ENCODE measurements at regions of chr2 and their contacts with region 1.

Region 1: GRCh38 chr2:182077451-182078142 is 91.9 kb downstream of the PPP1R1C start:
- DNase-seq: peak; percentile 26
- ATAC-seq: no peak
- H3K4me3 Mint-ChIP-seq: no peak overlapping the region
- H3K27ac Mint-ChIP-seq: no peak overlapping the region
- H3K4me1 Mint-ChIP-seq: no peaks in the 10 kb centered on the region
- H3K27me3 Mint-ChIP-seq: peaks cover 3% of the 10 kb centered on the region

Region 2: GRCh38 chr2:181742922-181743722 is 334.5 kb before region 1 on chr2:
- CTCF ChIA-PET with region 1: interaction called, 14 read pairs
- POLR2A ChIA-PET with region 1: no interaction called
- DNase-seq: peak; percentile 54
- ATAC-seq: no peak
- H3K4me3 Mint-ChIP-seq: no peak overlapping the region
- H3K27ac Mint-ChIP-seq: no peak overlapping the region
- H3K4me1 Mint-ChIP-seq: no peaks in the 10 kb centered on the region
- H3K27me3 Mint-ChIP-seq: peaks cover 12% of the 10 kb centered on the region

Region 3: DNA sequence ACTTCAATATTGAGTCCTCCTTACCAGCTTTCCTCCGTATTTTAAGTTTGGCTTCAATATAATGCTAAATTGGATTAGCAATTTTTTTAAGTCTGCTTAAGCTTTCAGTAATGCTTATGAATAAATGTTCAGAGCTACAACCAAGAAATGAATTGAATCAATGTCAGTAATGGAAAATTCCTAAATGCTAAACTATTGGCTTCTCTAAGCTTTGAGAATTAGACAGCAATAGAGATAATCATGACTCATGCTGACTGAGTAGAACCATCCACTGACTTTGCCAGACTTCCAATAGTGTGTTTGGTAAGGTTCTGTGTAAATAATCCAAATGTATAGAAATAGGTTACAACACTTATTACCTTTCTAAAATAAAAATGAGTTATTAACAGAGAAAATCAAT is 358.2 kb after region 1 on chr2:
- CTCF ChIA-PET with region 1: no interaction called
- POLR2A ChIA-PET with region 1: no interaction called
- DNase-seq: no peak
- ATAC-seq: no peak
- H3K4me3 Mint-ChIP-seq: no peak overlapping the region
- H3K27ac Mint-ChIP-seq: no peak overlapping the region
- H3K4me1 Mint-ChIP-seq: no peaks in the 10 kb centered on the region
- H3K27me3 Mint-ChIP-seq: no peaks in the 10 kb centered on the region